CD14-positive monocyte (primary cell): ENCODE measurements at regions of chr2 and their contacts with region 1.

Region 1: GRCh38 chr2:110993557-110994231 is 127.0 kb upstream of the BCL2L11 start:
- DNase-seq: peak; percentile 83 to 94 (median 88)
- H3K4me3 ChIP-seq: peak overlapping the region in 2 of 3 experiments; percentile 16 to 51
- H3K4me3 Mint-ChIP-seq: peak overlapping the region; percentile 27 to 76
- H3K27ac ChIP-seq: peak overlapping the region; percentile 94 to 96
- H3K27ac Mint-ChIP-seq: peak overlapping the region; percentile 98 to 99 (median 99)
- H3K4me1 ChIP-seq: peaks cover 56 to 61% of the 10 kb centered on the region in 2 donors
- H3K4me1 Mint-ChIP-seq: peaks cover 57% of the 10 kb centered on the region
- H3K27me3 ChIP-seq: no peaks in the 10 kb centered on the region
- H3K27me3 Mint-ChIP-seq: no peaks in the 10 kb centered on the region
- CTCF ChIP-seq: no peak

Region 2: GRCh38 chr2:111030260-111030891 is 36.7 kb after region 1 on chr2:
- intact Hi-C with region 1: loop called in 1 of 2 experiments (anchors 5 kb)
- DNase-seq: no peak
- H3K4me3 ChIP-seq: peak overlapping the region in 1 of 3 experiments; percentile 25
- H3K4me3 Mint-ChIP-seq: no peak overlapping the region
- H3K27ac ChIP-seq: peak overlapping the region in 1 of 2 donors; percentile 75
- H3K27ac Mint-ChIP-seq: peak overlapping the region in 6 of 7 donors; percentile 68 to 92 (median 81)
- H3K4me1 ChIP-seq: peaks cover 65 to 72% of the 10 kb centered on the region in 2 donors
- H3K4me1 Mint-ChIP-seq: peaks cover 77% of the 10 kb centered on the region
- H3K27me3 ChIP-seq: no peaks in the 10 kb centered on the region
- H3K27me3 Mint-ChIP-seq: no peaks in the 10 kb centered on the region
- CTCF ChIP-seq: no peak

Region 3: DNA sequence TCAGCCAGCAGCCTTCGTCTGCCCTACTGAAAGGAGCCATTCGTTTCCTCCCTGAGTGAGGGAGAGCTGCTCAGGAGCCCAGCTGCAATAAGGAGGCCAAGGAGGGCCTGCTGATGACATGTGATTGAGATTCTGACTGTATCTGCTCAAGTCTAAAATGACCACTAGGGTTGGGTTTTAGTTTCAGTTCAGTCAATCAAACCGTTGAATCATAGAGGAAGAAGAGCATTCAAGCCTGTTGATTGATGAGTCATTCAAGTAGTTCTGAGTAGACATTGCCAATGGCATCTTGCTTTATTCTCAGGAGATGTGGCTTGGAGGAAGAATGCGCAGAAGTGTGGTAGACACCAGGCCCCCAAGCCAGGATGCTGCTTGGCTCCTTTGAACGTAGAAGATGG is 107.1 kb after region 1 on chr2:
- intact Hi-C with region 1: loop called in 1 of 2 experiments (anchors 5 kb)
- DNase-seq: peak; percentile 80 to 91 (median 90)
- H3K4me3 ChIP-seq: peak overlapping the region in 1 of 3 experiments; percentile 52
- H3K4me3 Mint-ChIP-seq: peak overlapping the region; percentile 20 to 69
- H3K27ac ChIP-seq: peak overlapping the region; percentile 6 to 39
- H3K27ac Mint-ChIP-seq: peak overlapping the region; percentile 41 to 83 (median 68)
- H3K4me1 ChIP-seq: peaks cover 13 to 14% of the 10 kb centered on the region in 2 donors
- H3K4me1 Mint-ChIP-seq: peaks cover 13% of the 10 kb centered on the region
- H3K27me3 ChIP-seq: peaks cover 0 to 2% of the 10 kb centered on the region in 2 donors
- H3K27me3 Mint-ChIP-seq: peaks cover 0 to 4% (median 2%) of the 10 kb centered on the region in 3 donors
- CTCF ChIP-seq: peak; percentile 33

Region 4: GRCh38 chr2:111120253-111121027 is 126.7 kb after region 1 on chr2 and contains the start of gene BCL2L11:
- intact Hi-C with region 1: loop called in 1 of 2 experiments (anchors 5 kb)
- DNase-seq: peak; percentile 87 to 90 (median 88)
- H3K4me3 ChIP-seq: peak within 1 kb of the TSS; percentile 89 to 98 (median 97)
- H3K4me3 Mint-ChIP-seq: peak within 1 kb of the TSS; percentile 95 to 98
- H3K27ac ChIP-seq: peak within 1 kb of the TSS; percentile 85 to 90
- H3K27ac Mint-ChIP-seq: peak within 1 kb of the TSS; percentile 88 to 94 (median 93)
- H3K4me1 ChIP-seq: peaks cover 60 to 63% of the 10 kb centered on the region in 2 donors
- H3K4me1 Mint-ChIP-seq: peaks cover 51% of the 10 kb centered on the region
- H3K27me3 ChIP-seq: peaks cover 33 to 51% of the 10 kb centered on the region in 2 donors
- H3K27me3 Mint-ChIP-seq: peaks cover 49 to 58% (median 51%) of the 10 kb centered on the region in 3 donors
- CTCF ChIP-seq: no peak
- polyA plus RNA-seq, gene BCL2L11: 8.8 to 27.6 (median 20.4) TPM

Region 5: DNA sequence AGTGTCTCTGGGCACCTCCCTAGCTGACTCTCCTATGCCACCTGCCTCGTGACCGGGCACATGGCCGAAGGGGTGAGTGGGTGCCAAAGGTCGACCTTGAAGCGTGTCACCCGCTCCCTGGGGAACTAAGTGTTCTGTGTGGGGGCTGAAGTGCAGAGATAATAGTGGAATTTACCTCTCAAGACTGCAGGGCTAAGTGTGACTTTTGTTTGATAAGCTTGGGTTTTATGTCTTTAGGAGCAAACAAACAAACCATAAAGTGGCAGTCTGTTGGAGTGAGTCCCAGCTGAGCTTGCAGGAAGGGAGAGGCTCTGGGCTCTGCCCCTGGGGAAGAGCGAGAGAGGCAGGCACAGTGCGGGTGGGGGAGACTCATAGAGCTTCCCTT is 191.9 kb after region 1 on chr2:
- intact Hi-C with region 1: no loop called
- DNase-seq: no peak
- H3K4me3 ChIP-seq: no peak overlapping the region
- H3K4me3 Mint-ChIP-seq: no peak overlapping the region
- H3K27ac ChIP-seq: no peak overlapping the region
- H3K27ac Mint-ChIP-seq: peak overlapping the region in 1 of 7 donors; percentile 54
- H3K4me1 ChIP-seq: peaks cover 8 to 11% of the 10 kb centered on the region in 2 donors
- H3K4me1 Mint-ChIP-seq: peaks cover 10% of the 10 kb centered on the region
- H3K27me3 ChIP-seq: peaks cover 0 to 3% of the 10 kb centered on the region in 2 donors
- H3K27me3 Mint-ChIP-seq: peaks cover 5 to 9% (median 8%) of the 10 kb centered on the region in 3 donors
- CTCF ChIP-seq: no peak

Region 6: DNA sequence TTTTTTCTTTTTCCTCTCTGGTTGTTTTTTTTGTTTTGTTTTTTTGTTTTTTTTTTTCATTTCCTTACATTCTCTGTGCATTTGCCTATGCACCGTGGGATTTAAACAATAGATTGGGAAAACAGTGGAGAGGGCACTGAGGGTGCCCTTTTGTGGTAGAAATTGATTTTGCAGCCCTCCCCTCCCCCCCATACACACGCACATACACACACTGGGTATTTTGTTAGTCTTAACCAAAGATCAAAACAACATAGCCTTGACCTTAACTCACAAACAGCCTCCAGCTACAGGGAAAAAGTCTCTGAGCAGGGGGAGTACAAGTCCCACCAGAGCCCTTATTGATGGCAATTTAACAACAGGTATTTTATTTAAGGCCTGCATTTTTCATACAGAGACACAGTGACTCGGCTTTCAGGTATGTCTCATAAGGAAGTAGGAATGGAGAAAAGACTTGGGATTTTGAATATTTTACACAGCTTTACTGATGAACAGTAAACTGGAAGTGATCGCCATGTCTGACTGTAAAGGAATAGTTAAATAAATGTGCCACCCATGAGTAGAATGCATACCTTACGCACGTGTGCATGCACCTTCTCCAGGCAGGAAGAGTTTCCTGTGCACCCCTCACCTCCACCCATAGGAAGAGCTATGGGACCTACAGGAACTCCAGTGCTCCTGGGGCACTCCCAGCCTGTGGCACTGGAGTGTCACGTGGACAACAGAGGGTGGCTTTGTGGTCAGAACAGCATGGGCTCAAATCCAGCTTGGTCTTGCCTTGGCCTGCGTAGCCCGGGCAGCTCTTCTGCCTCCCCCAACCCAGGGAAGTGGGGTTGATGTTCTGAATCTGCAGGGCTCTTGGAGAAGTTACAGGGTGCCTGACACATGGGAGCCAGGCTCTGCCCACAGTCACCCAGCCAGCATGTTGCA is 623.9 kb after region 1 on chr2:
- intact Hi-C with region 1: no loop called
- DNase-seq: peak in 1 of 3 donors; percentile 33
- H3K4me3 ChIP-seq: peak overlapping the region in 1 of 3 experiments; percentile 29
- H3K4me3 Mint-ChIP-seq: peak overlapping the region in 1 of 2 donors; percentile 48
- H3K27ac ChIP-seq: peak overlapping the region; percentile 89 to 91
- H3K27ac Mint-ChIP-seq: peak overlapping the region; percentile 98 to 99 (median 99)
- H3K4me1 ChIP-seq: peaks cover 35 to 52% of the 10 kb centered on the region in 2 donors
- H3K4me1 Mint-ChIP-seq: peaks cover 47% of the 10 kb centered on the region
- H3K27me3 ChIP-seq: no peaks in the 10 kb centered on the region
- H3K27me3 Mint-ChIP-seq: peaks cover 0 to 2% (median 2%) of the 10 kb centered on the region in 3 donors
- CTCF ChIP-seq: no peak